ENCODE measurements at regions of chr21 and their contacts with region 1.

Region 1: GRCh38 chr21:14388282-14388681 is 5.3 kb upstream of the HSPA13 start:
- DNase-seq: no peak
- H3K4me3 ChIP-seq: no peak overlapping the region
- H3K27ac ChIP-seq: no peak overlapping the region
- H3K4me1 ChIP-seq: peaks cover 6% of the 10 kb centered on the region
- CTCF ChIP-seq: no peak

Region 2: GRCh38 chr21:14981246-14981645 is 593.0 kb after region 1 on chr21:
- CTCF ChIA-PET with region 1: no interaction called
- POLR2A ChIA-PET with region 1: interaction called, 10 read pairs
- intact Hi-C with region 1: no loop called
- DNase-seq: no peak
- H3K4me3 ChIP-seq: no peak overlapping the region
- H3K27ac ChIP-seq: no peak overlapping the region
- H3K4me1 ChIP-seq: no peaks in the 10 kb centered on the region
- CTCF ChIP-seq: no peak

Measured in OCI-LY7 (cell line).